Caco-2 (cell line): ENCODE measurements at regions of chr5 and their contacts with region 1.

Region 1: GRCh38 chr5:139844472-139845145 is 49.0 kb downstream of the PSD2 start:
- DNase-seq: peak; percentile 84 to 85
- H3K4me3 ChIP-seq: no peak overlapping the region
- H3K4me3 Mint-ChIP-seq: no peak overlapping the region
- H3K27ac Mint-ChIP-seq: no peak overlapping the region
- H3K4me1 ChIP-seq: no peaks in the 10 kb centered on the region
- H3K4me1 Mint-ChIP-seq: no peaks in the 10 kb centered on the region
- H3K27me3 ChIP-seq: 0 out of 2 replicates have a peak, but pooled peaks cover 1% of the 10 kb centered on the region
- H3K27me3 Mint-ChIP-seq: peaks cover 15% of the 10 kb centered on the region
- CTCF ChIP-seq: peak; percentile 67 to 92

Region 2: GRCh38 chr5:139543423-139543991 is 301.1 kb before region 1 on chr5:
- CTCF ChIA-PET with region 1: no interaction called
- POLR2A ChIA-PET with region 1: no interaction called
- intact Hi-C with region 1: no loop called
- DNase-seq: peak in 1 of 2 experiments; percentile 20
- H3K4me3 ChIP-seq: no peak overlapping the region
- H3K4me3 Mint-ChIP-seq: no peak overlapping the region
- H3K27ac Mint-ChIP-seq: no peak overlapping the region
- H3K4me1 ChIP-seq: no peaks in the 10 kb centered on the region
- H3K4me1 Mint-ChIP-seq: no peaks in the 10 kb centered on the region
- H3K27me3 ChIP-seq: no peaks in the 10 kb centered on the region
- H3K27me3 Mint-ChIP-seq: no peaks in the 10 kb centered on the region
- CTCF ChIP-seq: no peak

Region 3: GRCh38 chr5:139806726-139807646 is 37.6 kb before region 1 on chr5:
- CTCF ChIA-PET with region 1: interaction called, 3 read pairs
- POLR2A ChIA-PET with region 1: no interaction called
- intact Hi-C with region 1: loop called (anchors 1 kb)
- DNase-seq: no peak
- H3K4me3 ChIP-seq: no peak overlapping the region
- H3K4me3 Mint-ChIP-seq: no peak overlapping the region
- H3K27ac Mint-ChIP-seq: no peak overlapping the region
- H3K4me1 ChIP-seq: no peaks in the 10 kb centered on the region
- H3K4me1 Mint-ChIP-seq: no peaks in the 10 kb centered on the region
- H3K27me3 ChIP-seq: no peaks in the 10 kb centered on the region; the same call in 1 of the 2 replicates
- H3K27me3 Mint-ChIP-seq: peaks cover 16% of the 10 kb centered on the region
- CTCF ChIP-seq: no peak